ENCODE measurements at regions of chr10 and their contacts with region 1.

Region 1: DNA sequence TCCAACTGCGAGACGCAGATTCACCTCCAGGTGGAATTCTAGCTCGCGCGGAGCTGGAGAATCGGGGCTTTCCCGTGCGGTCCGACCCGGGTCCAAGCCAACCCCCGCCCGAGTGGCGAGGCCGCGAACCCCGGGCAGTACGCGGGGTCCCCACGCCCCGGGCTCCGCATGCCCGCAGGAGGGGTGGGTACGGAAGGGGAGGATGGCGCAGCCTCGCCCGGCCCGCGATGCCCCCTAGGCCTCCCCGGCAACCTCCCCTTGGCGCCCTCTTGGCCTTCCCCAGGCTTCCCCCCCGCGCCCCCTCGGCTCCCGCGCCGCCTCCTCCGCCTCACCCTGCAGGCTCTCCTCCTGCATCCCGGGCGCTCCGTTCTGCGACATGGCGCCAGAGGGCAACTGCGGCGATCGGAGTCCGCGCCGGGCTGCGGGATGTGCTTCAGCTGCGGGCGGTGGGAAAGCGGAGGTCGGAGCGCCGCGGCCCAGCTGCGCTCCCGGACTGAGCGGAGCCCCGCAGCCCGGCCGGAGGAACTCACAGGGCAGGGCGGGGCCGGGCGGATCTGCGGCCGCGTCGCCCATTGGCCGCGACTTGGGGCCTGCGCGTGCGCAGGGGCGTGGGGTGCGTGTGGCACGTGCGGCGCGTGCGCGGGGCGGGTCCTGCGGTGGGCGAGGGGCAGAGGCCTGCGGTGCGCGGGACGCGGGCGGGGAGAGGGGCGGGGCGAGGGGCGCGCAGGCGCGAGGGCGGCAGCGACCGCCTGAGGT is at the start of gene BNIP3:
- DNase-seq: peak; percentile 89
- ATAC-seq: peak; percentile 95
- H3K4me3 Mint-ChIP-seq: peak within 1 kb of the TSS; percentile 89
- H3K27ac Mint-ChIP-seq: peak within 1 kb of the TSS; percentile 59
- H3K4me1 Mint-ChIP-seq: peaks cover 40% of the 10 kb centered on the region
- H3K27me3 Mint-ChIP-seq: peaks cover 27% of the 10 kb centered on the region
- total RNA-seq, gene BNIP3: 21.9 to 39.2 TPM

Region 2: GRCh38 chr10:131848741-131849590 is 132.6 kb before region 1 on chr10:
- CTCF ChIA-PET with region 1: no interaction called
- DNase-seq: no peak
- ATAC-seq: no peak
- H3K4me3 Mint-ChIP-seq: no peak overlapping the region
- H3K27ac Mint-ChIP-seq: no peak overlapping the region
- H3K4me1 Mint-ChIP-seq: no peaks in the 10 kb centered on the region
- H3K27me3 Mint-ChIP-seq: no peaks in the 10 kb centered on the region

Region 3: DNA sequence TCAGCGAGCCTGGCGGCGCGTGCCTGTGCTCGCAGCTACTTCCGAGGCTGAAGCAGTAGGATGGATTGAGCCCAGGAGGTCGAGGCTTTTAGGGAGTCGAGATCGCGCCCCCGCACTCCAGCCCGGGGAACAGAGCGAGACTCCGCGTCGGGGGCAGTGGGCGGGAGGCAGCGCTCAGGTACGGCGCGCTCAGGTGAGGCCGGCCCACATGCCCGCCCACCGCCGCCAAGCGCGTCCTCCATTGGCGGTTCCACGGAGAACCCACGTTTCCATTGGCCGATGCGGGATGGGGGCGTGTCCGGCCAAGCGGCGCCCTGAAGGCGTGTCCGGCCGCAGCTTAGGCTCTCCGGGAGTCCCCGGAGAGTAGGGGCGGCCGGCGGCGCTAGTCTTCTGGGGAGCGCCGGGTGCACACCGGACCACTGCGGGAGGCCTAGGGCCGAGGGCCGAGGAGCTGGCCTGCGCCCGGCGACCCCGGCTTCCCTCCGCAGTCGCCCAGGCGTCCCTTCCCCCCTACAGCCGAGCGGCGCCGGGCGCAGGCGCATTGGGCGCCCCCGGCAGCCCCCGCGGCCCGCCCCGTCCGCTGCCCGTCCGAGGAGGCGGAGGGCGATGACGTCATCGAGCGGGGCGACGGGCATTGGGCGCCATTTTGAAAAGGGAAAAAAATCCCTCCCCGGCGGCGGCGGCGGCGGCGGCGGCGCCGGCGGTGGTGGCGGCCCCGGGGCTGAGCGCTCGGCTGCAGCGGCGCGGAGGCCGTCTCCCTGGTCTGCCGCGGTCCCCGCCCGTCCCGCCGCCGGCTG is 81.1 kb before region 1 on chr10 and contains the start of gene PPP2R2D:
- CTCF ChIA-PET with region 1: interaction called, 12 read pairs
- DNase-seq: peak; percentile 96
- ATAC-seq: peak; percentile 86
- H3K4me3 Mint-ChIP-seq: peak within 1 kb of the TSS; percentile 82
- H3K27ac Mint-ChIP-seq: peak within 1 kb of the TSS; percentile 85
- H3K4me1 Mint-ChIP-seq: peaks cover 58% of the 10 kb centered on the region
- H3K27me3 Mint-ChIP-seq: peaks cover 13% of the 10 kb centered on the region
- total RNA-seq, gene PPP2R2D: 36.0 to 41.9 TPM

Region 4: GRCh38 chr10:132422903-132423815 is 441.6 kb after region 1 on chr10:
- CTCF ChIA-PET with region 1: no interaction called
- DNase-seq: no peak
- ATAC-seq: no peak
- H3K4me3 Mint-ChIP-seq: no peak overlapping the region
- H3K27ac Mint-ChIP-seq: no peak overlapping the region
- H3K4me1 Mint-ChIP-seq: peaks cover 15% of the 10 kb centered on the region
- H3K27me3 Mint-ChIP-seq: no peaks in the 10 kb centered on the region